ENCODE measurements at regions of chr17 and their contacts with region 1.

Region 1: DNA sequence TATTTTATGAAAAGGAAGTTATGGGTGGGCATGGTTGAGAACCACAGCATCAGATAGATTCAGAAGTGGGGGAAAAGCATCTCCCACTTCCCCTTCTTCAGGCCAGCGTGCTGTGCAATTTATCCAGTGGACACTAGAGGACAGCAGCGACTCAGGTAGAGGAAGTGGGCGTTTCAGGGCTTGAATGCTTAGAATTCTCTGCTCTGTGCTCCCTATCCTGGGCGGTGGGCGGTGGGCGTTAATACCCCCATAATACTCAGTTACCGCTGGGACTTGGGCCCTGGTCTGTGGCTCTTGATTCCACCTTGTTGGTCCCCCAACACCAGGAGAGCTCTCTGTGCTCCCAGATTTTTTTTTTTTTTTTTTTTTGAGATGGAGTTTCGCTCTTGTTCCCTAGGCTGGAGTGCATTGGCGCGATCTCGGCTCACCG is 3.7 kb upstream of the LYZL6 start:
- DNase-seq: peak; percentile 74
- ATAC-seq: peak; percentile 97
- H3K4me3 Mint-ChIP-seq: no peak overlapping the region
- H3K27ac Mint-ChIP-seq: no peak overlapping the region
- H3K4me1 Mint-ChIP-seq: no peaks in the 10 kb centered on the region
- H3K27me3 Mint-ChIP-seq: no peaks in the 10 kb centered on the region; the same call in 1 of the 2 replicates
- CTCF ChIP-seq: peak; percentile 64

Region 2: DNA sequence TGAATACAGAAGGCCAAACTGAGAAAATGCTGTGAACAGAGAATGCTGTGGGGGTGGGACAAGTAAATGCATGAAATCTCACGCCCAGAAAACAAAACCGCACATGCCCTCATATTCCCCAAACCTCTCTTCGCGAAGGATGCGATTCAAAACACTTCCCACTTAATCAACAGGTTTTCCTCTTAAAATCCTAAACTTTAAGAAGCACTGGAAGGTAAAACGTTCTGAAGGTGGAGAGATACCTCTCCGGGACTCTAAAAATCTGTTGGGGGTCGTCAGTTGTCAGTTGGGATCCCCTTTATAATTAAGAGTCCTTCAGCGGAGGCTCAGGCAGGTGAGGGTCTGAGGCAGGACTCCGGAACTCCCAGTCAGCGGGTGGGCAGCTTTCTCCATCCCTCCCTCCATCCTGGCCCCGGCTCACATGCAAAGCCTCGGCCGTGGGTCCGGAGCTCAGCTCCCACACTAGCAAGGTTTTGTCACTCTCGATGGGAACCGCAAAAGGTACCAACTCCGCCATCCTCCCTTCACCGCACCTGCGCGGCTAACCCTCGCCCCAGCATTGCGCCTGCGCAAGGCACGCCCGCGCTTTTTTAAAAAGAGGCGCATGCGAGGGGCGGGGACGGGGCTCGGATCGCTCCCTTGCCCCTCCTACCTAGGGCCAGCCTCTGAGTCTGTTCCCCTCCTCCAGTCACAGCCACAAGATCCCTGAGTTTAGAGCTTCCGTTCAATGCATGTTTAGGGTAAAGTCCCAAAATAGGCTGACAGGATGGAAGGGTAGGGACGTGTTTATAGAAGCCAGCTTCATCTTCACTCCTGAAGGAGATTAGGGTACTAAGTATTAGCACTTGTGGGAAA is 16.7 kb before region 1 on chr17 and contains the start of gene RDM1:
- CTCF ChIA-PET with region 1: interaction called, 12 read pairs
- POLR2A ChIA-PET with region 1: no interaction called
- DNase-seq: peak; percentile 94
- ATAC-seq: peak; percentile 99
- H3K4me3 Mint-ChIP-seq: peak within 1 kb of the TSS; percentile 73
- H3K27ac Mint-ChIP-seq: peak within 1 kb of the TSS; percentile 19; the same call in 1 of the 2 replicates
- H3K4me1 Mint-ChIP-seq: peaks cover 25% of the 10 kb centered on the region
- H3K27me3 Mint-ChIP-seq: peaks cover 11% of the 10 kb centered on the region
- CTCF ChIP-seq: no peak
- total RNA-seq, gene RDM1: 4.7 to 6.4 TPM (median 5.2 TPM) in 3 replicates

Measured in WTC11 (cell line).